RWPE1 (cell line): ENCODE measurements at regions of chr10 and their contacts with region 1.

Region 1: GRCh38 chr10:100481462-100482081 is 18.8 kb downstream of the WNT8B start:
- DNase-seq: peak; percentile 97
- H3K27ac ChIP-seq: no peak overlapping the region
- CTCF ChIP-seq: no peak

Region 2: GRCh38 chr10:100468978-100469377 is 12.6 kb before region 1 on chr10:
- CTCF ChIA-PET with region 1: interaction called, 12 read pairs
- POLR2A ChIA-PET with region 1: interaction called, 6 read pairs
- DNase-seq: no peak
- H3K27ac ChIP-seq: no peak overlapping the region
- CTCF ChIP-seq: no peak

Region 3: GRCh38 chr10:100496567-100496966 is 15.0 kb after region 1 on chr10:
- CTCF ChIA-PET with region 1: interaction called, 34 read pairs
- POLR2A ChIA-PET with region 1: no interaction called
- DNase-seq: no peak
- H3K27ac ChIP-seq: no peak overlapping the region
- CTCF ChIP-seq: no peak

Region 4: DNA sequence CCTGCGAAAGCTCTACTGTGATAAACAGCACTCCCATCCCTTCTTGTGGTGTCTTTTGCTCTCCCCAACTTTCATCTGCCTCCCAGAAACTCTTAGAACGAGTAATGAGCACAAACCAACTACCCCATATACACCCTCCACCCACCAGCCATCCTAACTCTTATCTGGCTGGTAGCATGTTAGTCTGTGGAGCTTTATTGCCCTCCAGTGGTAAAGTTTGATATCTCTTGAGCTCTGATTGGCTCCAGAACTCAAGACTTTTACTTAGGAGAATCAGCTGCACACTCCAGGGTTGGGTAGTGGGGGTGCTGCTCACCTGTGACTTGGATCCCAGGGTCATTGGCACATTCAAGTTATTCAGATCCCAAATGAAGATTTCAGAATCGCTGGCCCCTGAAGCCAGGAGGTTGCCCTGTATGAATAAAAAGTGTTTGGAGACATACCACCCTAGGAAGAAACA is 27.1 kb after region 1 on chr10:
- CTCF ChIA-PET with region 1: interaction called, 38 read pairs
- POLR2A ChIA-PET with region 1: no interaction called
- DNase-seq: peak; percentile 67
- H3K27ac ChIP-seq: no peak overlapping the region
- CTCF ChIP-seq: peak; percentile 62

Region 5: DNA sequence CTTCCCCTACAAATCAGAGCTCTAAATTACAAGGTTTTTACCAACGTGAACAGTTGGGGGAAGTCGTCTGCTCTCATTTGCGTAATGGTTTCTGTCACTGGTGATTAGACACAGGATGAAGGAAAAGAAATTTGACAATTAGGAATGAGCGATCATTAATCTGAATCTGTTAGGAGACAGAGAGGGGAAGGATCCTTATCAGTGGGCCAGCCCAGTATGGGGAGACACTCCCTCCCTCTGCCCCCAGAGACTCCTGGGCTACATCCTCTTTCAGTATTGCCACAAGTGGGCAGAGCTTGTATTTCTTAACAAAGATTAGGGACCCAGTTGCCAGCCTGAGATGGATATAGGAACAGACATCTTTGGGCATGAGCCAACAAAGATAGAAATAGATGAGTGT is 69.6 kb after region 1 on chr10:
- CTCF ChIA-PET with region 1: no interaction called
- POLR2A ChIA-PET with region 1: no interaction called
- DNase-seq: no peak
- H3K27ac ChIP-seq: no peak overlapping the region
- CTCF ChIP-seq: no peak

Region 6: GRCh38 chr10:100614429-100615095 is 133.0 kb after region 1 on chr10:
- CTCF ChIA-PET with region 1: no interaction called
- POLR2A ChIA-PET with region 1: no interaction called
- DNase-seq: no peak
- H3K27ac ChIP-seq: no peak overlapping the region
- CTCF ChIP-seq: no peak